Naive thymus-derived CD4-positive, alpha-beta T cell (primary cell): ENCODE measurements at regions of chr16 and their contacts with region 1.

Region 1: GRCh38 chr16:67892899-67893742 is at the start of gene PSKH1:
- DNase-seq: peak; percentile 77 to 92 (median 84)
- ATAC-seq: peak; percentile 99
- H3K4me3 ChIP-seq: peak within 1 kb of the TSS; percentile 89
- H3K4me3 Mint-ChIP-seq: peak within 1 kb of the TSS; percentile 86 to 97 (median 94)
- H3K27ac ChIP-seq: peak within 1 kb of the TSS; percentile 94
- H3K27ac Mint-ChIP-seq: peak within 1 kb of the TSS; percentile 85 to 98 (median 97)
- H3K4me1 ChIP-seq: peaks cover 12 to 15% of the 10 kb centered on the region in 2 donors
- H3K4me1 Mint-ChIP-seq: peaks cover 22 to 48% (median 35%) of the 10 kb centered on the region in 7 donors
- H3K27me3 ChIP-seq: no peaks in the 10 kb centered on the region
- H3K27me3 Mint-ChIP-seq: no peaks in the 10 kb centered on the region
- total RNA-seq, gene PSKH1: 18.0 to 28.5 (median 23.3) TPM

Region 2: GRCh38 chr16:67301080-67301782 is 591.9 kb before region 1 on chr16:
- CTCF ChIA-PET with region 1: no interaction called
- POLR2A ChIA-PET with region 1: no interaction called
- intact Hi-C with region 1: no loop called
- DNase-seq: no peak
- ATAC-seq: no peak
- H3K4me3 ChIP-seq: no peak overlapping the region
- H3K4me3 Mint-ChIP-seq: no peak overlapping the region
- H3K27ac ChIP-seq: no peak overlapping the region
- H3K27ac Mint-ChIP-seq: no peak overlapping the region
- H3K4me1 ChIP-seq: no peaks in the 10 kb centered on the region
- H3K4me1 Mint-ChIP-seq: no peaks in the 10 kb centered on the region
- H3K27me3 ChIP-seq: no peaks in the 10 kb centered on the region
- H3K27me3 Mint-ChIP-seq: peaks cover 0 to 4% (median 0%) of the 10 kb centered on the region in 5 donors

Region 3: GRCh38 chr16:67660564-67661028 is 232.5 kb before region 1 on chr16 and contains the start of gene PARD6A:
- CTCF ChIA-PET with region 1: no interaction called
- POLR2A ChIA-PET with region 1: no interaction called
- intact Hi-C with region 1: loop called (anchors 1 to 10 kb)
- DNase-seq: peak; percentile 81 to 95 (median 93)
- ATAC-seq: peak; percentile 89
- H3K4me3 ChIP-seq: peak within 1 kb of the TSS; percentile 99
- H3K4me3 Mint-ChIP-seq: peak within 1 kb of the TSS; percentile 90 to 97 (median 94)
- H3K27ac ChIP-seq: peak within 1 kb of the TSS; percentile 97
- H3K27ac Mint-ChIP-seq: peak within 1 kb of the TSS; percentile 84 to 98 (median 97)
- H3K4me1 ChIP-seq: peaks cover 11 to 17% of the 10 kb centered on the region in 2 donors
- H3K4me1 Mint-ChIP-seq: peaks cover 15 to 40% (median 22%) of the 10 kb centered on the region in 7 donors
- H3K27me3 ChIP-seq: no peaks in the 10 kb centered on the region
- H3K27me3 Mint-ChIP-seq: no peaks in the 10 kb centered on the region
- total RNA-seq, gene PARD6A: 4.5 to 11.2 (median 4.7) TPM

Region 4: DNA sequence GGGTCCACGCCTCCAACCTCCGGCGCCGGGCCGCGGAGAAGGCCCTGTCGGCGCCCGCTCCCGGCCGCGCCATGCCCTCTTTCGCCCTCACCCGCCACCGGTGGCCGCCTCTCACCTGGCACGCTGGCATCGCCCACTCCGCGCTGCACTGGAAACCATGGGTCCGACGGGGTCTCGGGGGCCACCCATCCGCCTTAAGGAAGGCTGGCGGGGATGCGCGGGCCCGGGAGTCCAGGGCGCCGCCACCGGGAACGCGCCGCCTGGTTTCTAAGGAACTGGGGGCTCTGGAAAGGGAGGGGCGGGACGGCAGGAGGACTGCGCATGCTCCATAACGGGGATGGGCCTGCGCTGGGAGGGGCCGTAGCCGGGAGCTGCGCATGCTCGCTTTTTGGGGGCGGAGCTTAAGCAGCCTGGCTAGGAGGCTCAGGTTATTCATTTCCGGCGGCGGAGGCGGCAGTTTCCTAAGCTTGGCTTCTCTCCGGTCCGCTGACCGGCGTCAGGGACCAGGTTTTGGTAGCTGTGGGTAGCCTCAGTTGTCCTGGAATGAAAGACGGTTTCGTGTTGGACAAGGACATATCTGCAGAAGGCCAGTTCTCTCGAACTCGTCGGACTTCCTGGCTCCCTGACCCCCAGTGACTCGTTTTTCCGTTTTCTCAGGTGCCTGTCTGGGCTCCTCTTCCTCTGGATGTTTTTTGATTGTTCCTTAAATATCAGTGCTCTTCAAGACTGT is 173.9 kb before region 1 on chr16 and contains the start of gene GFOD2:
- CTCF ChIA-PET with region 1: no interaction called
- POLR2A ChIA-PET with region 1: no interaction called
- intact Hi-C with region 1: loop called in 1 of 2 experiments (anchors 2 kb)
- DNase-seq: peak; percentile 94 to 100 (median 96)
- ATAC-seq: peak; percentile 96
- H3K4me3 ChIP-seq: peak within 1 kb of the TSS; percentile 95
- H3K4me3 Mint-ChIP-seq: peak within 1 kb of the TSS; percentile 90 to 99 (median 94)
- H3K27ac ChIP-seq: peak within 1 kb of the TSS; percentile 88
- H3K27ac Mint-ChIP-seq: peak within 1 kb of the TSS; percentile 91 to 99 (median 98)
- H3K4me1 ChIP-seq: peaks cover 15 to 16% of the 10 kb centered on the region in 2 donors
- H3K4me1 Mint-ChIP-seq: peaks cover 19 to 51% (median 39%) of the 10 kb centered on the region in 7 donors
- H3K27me3 ChIP-seq: no peaks in the 10 kb centered on the region
- H3K27me3 Mint-ChIP-seq: no peaks in the 10 kb centered on the region
- total RNA-seq, gene GFOD2: 6.3 to 13.4 (median 11.4) TPM

Region 5: DNA sequence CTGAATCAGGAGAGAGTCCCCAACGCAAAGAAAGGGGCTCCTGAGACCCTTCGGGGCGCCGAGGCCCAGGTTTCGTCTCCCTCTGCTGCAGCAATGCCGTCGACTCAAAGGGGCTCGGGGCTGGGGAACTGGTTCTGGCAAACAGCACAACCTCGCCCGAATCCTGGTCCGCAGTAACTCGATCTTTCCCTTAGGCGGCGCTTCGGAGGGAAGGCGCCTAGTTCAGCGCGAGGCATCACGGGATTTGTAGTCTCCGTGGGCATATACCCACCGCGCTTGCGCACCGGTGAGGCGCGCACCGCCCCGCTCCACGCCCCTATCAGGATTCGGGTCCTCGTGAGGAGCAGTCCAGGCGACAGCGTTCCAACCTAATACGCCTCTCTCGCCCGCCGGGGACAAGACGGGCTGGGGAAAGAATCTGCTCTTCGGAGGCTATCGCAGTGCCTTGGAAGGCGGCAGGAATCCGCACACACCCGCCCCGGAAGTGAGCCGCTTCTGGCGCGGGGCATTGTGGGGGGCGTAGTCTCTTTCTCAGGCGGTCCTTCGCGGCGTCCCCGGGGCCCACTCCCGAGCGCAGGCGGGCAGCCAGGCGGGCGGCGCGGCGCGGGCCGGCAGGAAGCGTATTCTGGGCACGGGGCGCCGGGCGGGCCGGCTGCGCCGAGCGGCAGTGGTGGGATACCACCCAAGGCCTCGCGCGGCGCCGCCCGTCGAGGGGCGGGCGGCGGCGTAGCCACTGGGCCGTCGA is 51.2 kb before region 1 on chr16 and contains the start of gene THAP11:
- CTCF ChIA-PET with region 1: no interaction called
- POLR2A ChIA-PET with region 1: interaction called, 5 read pairs
- intact Hi-C with region 1: loop called (anchors 1 to 5 kb)
- DNase-seq: peak; percentile 91 to 99 (median 96)
- ATAC-seq: peak; percentile 76
- H3K4me3 ChIP-seq: peak within 1 kb of the TSS; percentile 100
- H3K4me3 Mint-ChIP-seq: peak within 1 kb of the TSS; percentile 94 to 97 (median 96)
- H3K27ac ChIP-seq: peak within 1 kb of the TSS; percentile 99
- H3K27ac Mint-ChIP-seq: peak within 1 kb of the TSS; percentile 94 to 98 (median 97)
- H3K4me1 ChIP-seq: peaks cover 34 to 36% of the 10 kb centered on the region in 2 donors
- H3K4me1 Mint-ChIP-seq: peaks cover 18 to 41% (median 36%) of the 10 kb centered on the region in 7 donors
- H3K27me3 ChIP-seq: no peaks in the 10 kb centered on the region
- H3K27me3 Mint-ChIP-seq: no peaks in the 10 kb centered on the region
- total RNA-seq, gene THAP11: 29.0 to 62.7 (median 44.6) TPM

Region 6: GRCh38 chr16:67968400-67969253 is 75.5 kb after region 1 on chr16 and contains the start of gene SLC12A4:
- CTCF ChIA-PET with region 1: no interaction called
- POLR2A ChIA-PET with region 1: interaction called, 3 read pairs
- intact Hi-C with region 1: loop called in 1 of 2 experiments (anchors 1 kb)
- DNase-seq: peak; percentile 74 to 96 (median 81)
- ATAC-seq: peak; percentile 97
- H3K4me3 ChIP-seq: peak within 1 kb of the TSS; percentile 88
- H3K4me3 Mint-ChIP-seq: peak within 1 kb of the TSS; percentile 86 to 100 (median 97)
- H3K27ac ChIP-seq: peak within 1 kb of the TSS; percentile 81
- H3K27ac Mint-ChIP-seq: peak within 1 kb of the TSS; percentile 89 to 95 (median 93)
- H3K4me1 ChIP-seq: peaks cover 10 to 14% of the 10 kb centered on the region in 2 donors
- H3K4me1 Mint-ChIP-seq: peaks cover 20 to 42% (median 29%) of the 10 kb centered on the region in 7 donors
- H3K27me3 ChIP-seq: no peaks in the 10 kb centered on the region
- H3K27me3 Mint-ChIP-seq: no peaks in the 10 kb centered on the region
- total RNA-seq, gene SLC12A4: 22.8 to 44.4 (median 31.3) TPM

Region 7: DNA sequence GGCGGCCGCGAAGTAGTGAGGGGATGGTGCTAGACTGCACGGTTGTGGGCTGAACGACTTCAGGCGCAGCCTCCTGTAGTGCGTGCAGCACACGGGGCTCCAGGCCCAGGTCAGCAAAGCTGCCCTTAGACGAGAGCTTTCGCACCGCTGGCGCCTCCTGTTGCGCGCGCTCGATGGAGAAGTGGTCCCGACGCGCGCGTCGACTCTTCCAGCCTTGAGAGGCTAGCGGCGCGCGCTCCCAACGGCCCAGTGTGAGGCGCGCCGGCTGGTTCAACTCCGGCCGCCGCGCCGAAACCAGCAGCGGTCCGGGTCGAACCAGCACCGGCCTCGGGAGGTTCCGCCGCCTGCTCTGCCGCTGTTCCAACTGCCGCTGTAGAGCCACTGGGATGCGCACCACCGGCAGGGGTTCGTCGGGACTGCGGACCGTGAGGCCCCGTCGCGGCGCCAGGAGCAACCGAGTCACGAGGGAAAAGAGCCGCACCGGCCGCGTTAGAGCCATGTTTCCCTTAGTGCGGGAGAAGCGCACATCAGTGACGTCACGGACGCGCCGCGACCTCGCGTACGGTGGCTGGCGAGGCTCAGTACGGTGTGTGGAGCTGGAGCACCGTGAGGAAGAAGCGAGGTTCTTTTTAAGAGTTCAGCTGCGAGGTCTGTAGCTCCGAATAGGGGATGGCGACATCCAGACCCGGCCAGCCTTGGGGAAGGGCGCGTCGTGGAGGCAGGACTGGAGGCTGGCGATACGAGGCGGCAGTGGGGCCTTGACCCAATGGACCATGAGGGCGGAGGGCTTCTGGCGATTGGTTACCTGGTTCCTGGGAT is 129.8 kb after region 1 on chr16 and contains the starts of genes DDX28 and DUS2:
- CTCF ChIA-PET with region 1: interaction called, 4 read pairs
- POLR2A ChIA-PET with region 1: no interaction called
- intact Hi-C with region 1: loop called in 1 of 2 experiments (anchors 1 kb)
- DNase-seq: peak; percentile 89 to 98 (median 94)
- ATAC-seq: peak; percentile 98
- H3K4me3 ChIP-seq: peak within 1 kb of the TSS; percentile 67
- H3K4me3 Mint-ChIP-seq: peak within 1 kb of the TSS; percentile 88 to 100 (median 98)
- H3K27ac ChIP-seq: peak within 1 kb of the TSS; percentile 92
- H3K27ac Mint-ChIP-seq: peak within 1 kb of the TSS; percentile 94 to 100 (median 96)
- H3K4me1 ChIP-seq: peaks cover 16 to 22% of the 10 kb centered on the region in 2 donors
- H3K4me1 Mint-ChIP-seq: peaks cover 13 to 42% (median 30%) of the 10 kb centered on the region in 7 donors
- H3K27me3 ChIP-seq: no peaks in the 10 kb centered on the region
- H3K27me3 Mint-ChIP-seq: peaks cover 0 to 2% (median 0%) of the 10 kb centered on the region in 5 donors
- total RNA-seq, gene DDX28: 15.5 to 19.9 (median 19.1) TPM
- total RNA-seq, gene DUS2: 13.6 to 25.9 (median 18.3) TPM

Region 8: GRCh38 chr16:68300736-68301459 is 407.8 kb after region 1 on chr16:
- CTCF ChIA-PET with region 1: no interaction called
- POLR2A ChIA-PET with region 1: no interaction called
- intact Hi-C with region 1: no loop called
- DNase-seq: no peak
- ATAC-seq: no peak
- H3K4me3 ChIP-seq: no peak overlapping the region
- H3K4me3 Mint-ChIP-seq: no peak overlapping the region
- H3K27ac ChIP-seq: no peak overlapping the region
- H3K27ac Mint-ChIP-seq: peak overlapping the region in 8 of 9 donors; percentile 8 to 79 (median 43)
- H3K4me1 ChIP-seq: no peaks in the 10 kb centered on the region
- H3K4me1 Mint-ChIP-seq: peaks cover 4 to 61% (median 37%) of the 10 kb centered on the region in 7 donors
- H3K27me3 ChIP-seq: no peaks in the 10 kb centered on the region
- H3K27me3 Mint-ChIP-seq: no peaks in the 10 kb centered on the region